MCF 10A (cell line): ENCODE measurements at regions of chr2 and their contacts with region 1.

Region 1: DNA sequence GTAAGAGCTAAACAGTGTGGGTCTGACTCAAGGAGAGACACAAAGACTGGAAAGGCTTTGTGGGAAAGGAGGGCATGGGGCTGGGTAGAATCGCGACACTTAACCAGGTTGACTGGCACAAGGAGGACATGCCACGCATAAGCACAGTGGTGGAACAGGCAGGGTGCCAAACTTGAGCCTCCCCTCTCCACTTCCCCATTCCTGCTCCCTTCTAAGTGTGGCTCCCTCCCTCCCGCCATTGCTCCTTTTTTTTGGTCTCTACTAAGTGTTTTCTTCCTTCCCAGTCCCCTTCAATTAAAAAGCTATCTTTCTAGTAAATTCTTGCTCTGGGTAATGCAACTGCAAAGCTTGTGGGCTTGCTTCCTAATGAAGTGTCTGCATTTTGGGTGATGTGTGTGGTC is 40.3 kb upstream of the ZFP36L2 start:
- DNase-seq: no peak
- H3K4me3 Mint-ChIP-seq: no peak overlapping the region
- H3K27ac Mint-ChIP-seq: peak overlapping the region; percentile 79
- H3K4me1 Mint-ChIP-seq: peaks cover 23% of the 10 kb centered on the region
- H3K27me3 Mint-ChIP-seq: no peaks in the 10 kb centered on the region
- CTCF ChIP-seq: no peak

Region 2: DNA sequence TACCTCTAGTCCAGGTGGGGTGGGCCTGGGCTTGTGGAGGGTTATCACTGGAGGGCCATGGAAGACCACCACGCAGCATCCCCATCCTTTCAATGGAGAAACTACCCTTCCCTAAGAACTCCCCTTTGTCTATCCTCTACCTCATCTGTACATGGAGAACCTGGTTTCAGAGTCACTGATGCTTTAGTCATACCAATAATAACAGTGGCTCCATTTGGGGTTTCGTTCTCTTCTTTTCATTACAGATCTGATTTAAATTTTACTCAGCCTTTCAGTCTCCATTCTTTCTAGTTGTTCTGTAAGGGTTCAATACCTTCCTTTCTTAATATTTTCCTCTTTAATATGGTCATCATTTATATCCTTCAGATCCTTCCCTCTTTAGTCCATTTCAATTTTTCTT is 14.3 kb after region 1 on chr2:
- CTCF ChIA-PET with region 1: interaction called, 5 read pairs
- POLR2A ChIA-PET with region 1: interaction called, 3 read pairs
- intact Hi-C with region 1: loop called (anchors 1 kb)
- DNase-seq: no peak
- H3K4me3 Mint-ChIP-seq: no peak overlapping the region
- H3K27ac Mint-ChIP-seq: no peak overlapping the region
- H3K4me1 Mint-ChIP-seq: peaks cover 10% of the 10 kb centered on the region
- H3K27me3 Mint-ChIP-seq: no peaks in the 10 kb centered on the region
- CTCF ChIP-seq: no peak

Region 3: GRCh38 chr2:43312755-43313641 is 46.3 kb after region 1 on chr2:
- CTCF ChIA-PET with region 1: no interaction called
- POLR2A ChIA-PET with region 1: no interaction called
- intact Hi-C with region 1: no loop called
- DNase-seq: peak; percentile 76
- H3K4me3 Mint-ChIP-seq: no peak overlapping the region
- H3K27ac Mint-ChIP-seq: peak overlapping the region; percentile 63
- H3K4me1 Mint-ChIP-seq: peaks cover 24% of the 10 kb centered on the region
- H3K27me3 Mint-ChIP-seq: no peaks in the 10 kb centered on the region
- CTCF ChIP-seq: no peak